ENCODE measurements at regions of chr2 and their contacts with region 1.

Region 1: GRCh38 chr2:27723372-27724144 is 48.0 kb upstream of the MRPL33 start:
- DNase-seq: peak; percentile 68 to 78 (median 73)
- ATAC-seq: peak; percentile 41 to 71 (median 64)
- H3K4me3 ChIP-seq: no peak overlapping the region
- H3K27ac ChIP-seq: peak overlapping the region; percentile 6 to 94 (median 72)
- H3K4me1 ChIP-seq: peaks cover 0 to 59% (median 37%) of the 10 kb centered on the region in 12 donors
- H3K27me3 ChIP-seq: no peaks in the 10 kb centered on the region
- CTCF ChIP-seq: peak; percentile 63 to 91 (median 85)
- POLR2A ChIP-seq: no peak

Region 2: GRCh38 chr2:27050281-27050995 is 673.1 kb before region 1 on chr2:
- intact Hi-C with region 1: no loop called
- DNase-seq: peak; percentile 80 to 94 (median 87)
- ATAC-seq: peak; percentile 81 to 90 (median 86)
- H3K4me3 ChIP-seq: peak overlapping the region; percentile 73 to 97 (median 91)
- H3K27ac ChIP-seq: peak overlapping the region; percentile 47 to 95 (median 90)
- H3K4me1 ChIP-seq: peaks cover 0 to 25% (median 12%) of the 10 kb centered on the region in 12 donors
- H3K27me3 ChIP-seq: no peaks in the 10 kb centered on the region
- CTCF ChIP-seq: peak in 11 of 12 donors; percentile 8 to 60 (median 38)
- POLR2A ChIP-seq: no peak

Region 3: GRCh38 chr2:27771548-27772335 is 48.2 kb after region 1 on chr2 and contains the start of gene MRPL33:
- intact Hi-C with region 1: loop called in 4 of 10 experiments (anchors 5 to 10 kb)
- DNase-seq: peak; percentile 96 to 98 (median 96)
- ATAC-seq: peak; percentile 95 to 98 (median 98)
- H3K4me3 ChIP-seq: peak within 1 kb of the TSS; percentile 56 to 89 (median 76)
- H3K27ac ChIP-seq: peak within 1 kb of the TSS; percentile 88 to 97 (median 92)
- H3K4me1 ChIP-seq: peaks cover 4 to 50% (median 37%) of the 10 kb centered on the region in 12 donors
- H3K27me3 ChIP-seq: no peaks in the 10 kb centered on the region
- CTCF ChIP-seq: no peak
- POLR2A ChIP-seq: peak in 1 of 2 donors; percentile 61
- total RNA-seq, gene MRPL33: 163 to 503 (median 305) TPM

Measured in heart left ventricle (tissue), 16 donors.